Mammary epithelial cell (primary cell): ENCODE measurements at regions of chrX and their contacts with region 1.

Region 1: GRCh38 chrX:102768987-102769761 is 48.6 kb downstream of the GPRASP3 start:
- DNase-seq: peak; percentile 83
- H3K4me3 ChIP-seq: peak overlapping the region; percentile 65 to 74 (median 72)
- H3K27ac ChIP-seq: peak overlapping the region; percentile 92
- H3K4me1 ChIP-seq: no peaks in the 10 kb centered on the region
- H3K27me3 ChIP-seq: no peaks in the 10 kb centered on the region
- CTCF ChIP-seq: no peak

Region 2: DNA sequence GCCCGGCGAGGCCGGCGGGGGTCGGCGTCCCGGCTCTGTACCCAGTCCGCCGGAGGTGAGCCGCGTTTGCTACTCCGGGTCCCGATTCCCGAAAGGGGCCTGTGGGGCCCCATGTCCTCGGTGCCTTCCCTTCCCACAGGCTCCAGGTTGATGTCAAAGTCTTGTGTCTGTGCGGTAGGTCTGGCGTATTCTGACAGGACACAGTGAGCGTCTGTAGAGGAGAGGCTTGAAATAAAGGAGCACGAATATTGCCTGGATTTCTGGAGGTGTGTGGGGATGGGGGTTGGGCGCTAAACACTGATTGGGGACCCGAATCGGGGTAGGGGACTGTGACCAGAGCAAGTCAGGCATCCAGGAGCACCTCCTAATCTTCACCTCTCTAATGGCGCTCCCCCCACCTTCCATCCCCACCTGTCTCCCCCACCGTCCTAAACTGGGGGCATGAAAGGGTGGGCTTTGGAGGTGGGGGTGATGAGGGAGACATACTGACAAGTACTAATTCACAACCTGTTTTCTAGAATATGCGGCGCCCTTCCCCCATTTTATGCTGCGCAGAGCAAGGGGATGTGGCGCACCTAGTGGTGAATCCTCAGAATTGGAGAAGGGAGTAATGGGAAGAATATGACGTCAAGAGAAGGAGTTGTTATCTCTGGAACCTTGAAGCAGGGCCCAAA is 56.1 kb before region 1 on chrX:
- CTCF ChIA-PET with region 1: no interaction called
- dilution Hi-C with region 1: no loop called
- in situ Hi-C with region 1: no loop called
- intact Hi-C with region 1: loop called (anchors 2 kb)
- DNase-seq: peak; percentile 40
- H3K4me3 ChIP-seq: peak overlapping the region; percentile 55 to 70 (median 61)
- H3K27ac ChIP-seq: no peak overlapping the region
- H3K4me1 ChIP-seq: no peaks in the 10 kb centered on the region
- H3K27me3 ChIP-seq: no peaks in the 10 kb centered on the region
- CTCF ChIP-seq: peak; percentile 36 to 58

Region 3: GRCh38 chrX:103446665-103447302 is 677.6 kb after region 1 on chrX:
- CTCF ChIA-PET with region 1: no interaction called
- dilution Hi-C with region 1: no loop called
- in situ Hi-C with region 1: no loop called
- intact Hi-C with region 1: no loop called
- DNase-seq: peak; percentile 68
- H3K4me3 ChIP-seq: no peak overlapping the region
- H3K27ac ChIP-seq: peak overlapping the region; percentile 94
- H3K4me1 ChIP-seq: peaks cover 22% of the 10 kb centered on the region
- H3K27me3 ChIP-seq: no peaks in the 10 kb centered on the region
- CTCF ChIP-seq: no peak